ENCODE measurements at regions of chr1 and their contacts with region 1.

Region 1: GRCh38 chr1:66996018-66996682 is 57.8 kb downstream of the SLC35D1 start:
- DNase-seq: peak; percentile 79
- ATAC-seq: peak; percentile 78
- H3K4me3 ChIP-seq: no peak overlapping the region
- H3K4me3 Mint-ChIP-seq: no peak overlapping the region
- H3K27ac ChIP-seq: no peak overlapping the region
- H3K27ac Mint-ChIP-seq: no peak overlapping the region
- H3K4me1 ChIP-seq: peaks cover 3 to 4% of the 10 kb centered on the region in 2 donors
- H3K4me1 Mint-ChIP-seq: peaks cover 8% of the 10 kb centered on the region
- H3K27me3 ChIP-seq: no peaks in the 10 kb centered on the region
- H3K27me3 Mint-ChIP-seq: no peaks in the 10 kb centered on the region
- CTCF ChIP-seq: peak; percentile 77

Region 2: DNA sequence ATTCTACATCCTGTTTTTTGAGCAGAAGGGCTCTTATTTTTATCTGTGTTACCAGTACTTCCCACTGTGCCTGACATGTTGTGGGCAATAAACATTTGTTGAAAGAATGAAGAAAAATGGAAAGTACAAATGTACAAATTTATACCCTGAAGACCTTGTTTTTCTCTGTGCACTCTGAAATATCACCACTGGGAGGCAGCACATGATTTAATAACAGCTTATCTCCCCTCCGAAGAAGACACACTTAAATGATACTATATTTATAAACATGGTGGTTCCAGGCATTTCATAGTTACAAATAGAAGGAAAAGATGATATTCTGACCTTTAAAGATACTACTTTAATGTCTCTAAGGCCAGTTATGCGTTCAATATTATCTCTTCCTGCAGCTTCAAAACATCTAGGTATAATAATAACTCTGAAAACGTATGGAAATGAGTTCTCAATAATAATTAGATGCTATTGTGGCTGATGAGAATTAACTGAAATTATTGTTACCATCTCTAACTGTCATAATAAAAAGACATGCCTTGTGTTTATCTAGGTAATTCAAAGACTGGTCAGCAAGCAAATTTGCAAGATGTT is 231.1 kb before region 1 on chr1:
- CTCF ChIA-PET with region 1: interaction called, 13 read pairs
- POLR2A ChIA-PET with region 1: no interaction called
- intact Hi-C with region 1: loop called (anchors 1 kb)
- DNase-seq: peak; percentile 61
- ATAC-seq: peak; percentile 41
- H3K4me3 ChIP-seq: no peak overlapping the region
- H3K4me3 Mint-ChIP-seq: no peak overlapping the region
- H3K27ac ChIP-seq: no peak overlapping the region
- H3K27ac Mint-ChIP-seq: no peak overlapping the region
- H3K4me1 ChIP-seq: no peaks in the 10 kb centered on the region
- H3K4me1 Mint-ChIP-seq: no peaks in the 10 kb centered on the region
- H3K27me3 ChIP-seq: no peaks in the 10 kb centered on the region
- H3K27me3 Mint-ChIP-seq: no peaks in the 10 kb centered on the region
- CTCF ChIP-seq: peak; percentile 88

Region 3: GRCh38 chr1:66893703-66894102 is 102.4 kb before region 1 on chr1:
- CTCF ChIA-PET with region 1: no interaction called
- POLR2A ChIA-PET with region 1: no interaction called
- intact Hi-C with region 1: no loop called
- DNase-seq: no peak
- ATAC-seq: no peak
- H3K4me3 ChIP-seq: no peak overlapping the region
- H3K4me3 Mint-ChIP-seq: no peak overlapping the region
- H3K27ac ChIP-seq: no peak overlapping the region
- H3K27ac Mint-ChIP-seq: no peak overlapping the region
- H3K4me1 ChIP-seq: no peaks in the 10 kb centered on the region
- H3K4me1 Mint-ChIP-seq: no peaks in the 10 kb centered on the region
- H3K27me3 ChIP-seq: no peaks in the 10 kb centered on the region
- H3K27me3 Mint-ChIP-seq: no peaks in the 10 kb centered on the region
- CTCF ChIP-seq: no peak

Region 4: DNA sequence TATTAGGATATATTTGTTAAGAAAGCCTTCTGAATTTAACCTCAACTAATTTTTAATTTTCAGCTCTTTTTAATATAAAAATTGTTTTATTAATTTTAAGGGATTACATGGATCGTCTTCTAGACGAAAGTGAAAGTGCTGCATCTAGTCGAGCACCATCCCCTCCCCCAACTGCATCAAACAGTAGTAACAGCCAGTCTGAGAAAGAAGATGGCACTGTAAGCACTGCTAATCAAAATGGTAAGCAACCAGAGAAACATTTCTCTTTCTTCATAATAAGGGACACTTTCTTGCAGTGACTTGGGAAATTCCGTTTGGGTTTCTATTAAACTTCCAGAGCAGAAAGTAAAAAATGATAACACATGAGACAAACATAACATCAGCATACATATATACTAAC is 14.5 kb before region 1 on chr1:
- CTCF ChIA-PET with region 1: interaction called, 10 read pairs
- POLR2A ChIA-PET with region 1: no interaction called
- intact Hi-C with region 1: no loop called
- DNase-seq: peak; percentile 29
- ATAC-seq: no peak
- H3K4me3 ChIP-seq: peak overlapping the region in 1 of 5 experiments; percentile 5
- H3K4me3 Mint-ChIP-seq: peak overlapping the region; percentile 41
- H3K27ac ChIP-seq: peak overlapping the region in 1 of 2 donors; percentile 74
- H3K27ac Mint-ChIP-seq: no peak overlapping the region
- H3K4me1 ChIP-seq: peaks cover 0 to 6% of the 10 kb centered on the region in 2 donors
- H3K4me1 Mint-ChIP-seq: peaks cover 14% of the 10 kb centered on the region
- H3K27me3 ChIP-seq: no peaks in the 10 kb centered on the region
- H3K27me3 Mint-ChIP-seq: no peaks in the 10 kb centered on the region
- CTCF ChIP-seq: no peak

Region 5: DNA sequence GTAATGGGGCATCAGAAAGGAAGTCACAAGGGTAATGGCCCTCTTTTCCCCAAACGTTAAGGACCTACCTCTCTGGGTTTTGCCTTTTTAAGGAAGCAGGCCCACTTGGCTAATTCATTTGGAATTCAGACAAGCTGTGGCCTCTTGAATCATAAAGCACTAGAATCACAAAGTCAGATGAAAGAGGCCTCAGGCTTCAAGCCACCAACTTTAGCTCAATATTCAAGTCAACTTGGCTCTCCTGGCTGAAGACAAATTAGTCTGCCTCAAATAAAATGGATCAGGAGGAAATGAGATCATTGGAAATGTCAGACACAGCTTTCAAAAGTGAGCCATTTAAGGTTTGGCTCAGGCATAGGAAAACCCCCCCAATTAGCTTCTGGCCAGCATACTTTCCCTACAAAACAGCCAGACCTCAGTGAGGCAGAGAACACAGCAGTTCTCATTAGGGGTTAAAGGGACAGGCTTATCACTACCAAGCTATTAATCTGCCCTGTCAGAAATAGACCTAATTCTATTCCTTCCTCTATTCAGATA is 23.5 kb after region 1 on chr1:
- CTCF ChIA-PET with region 1: interaction called, 11 read pairs
- POLR2A ChIA-PET with region 1: no interaction called
- intact Hi-C with region 1: no loop called
- DNase-seq: no peak
- ATAC-seq: no peak
- H3K4me3 ChIP-seq: no peak overlapping the region
- H3K4me3 Mint-ChIP-seq: no peak overlapping the region
- H3K27ac ChIP-seq: no peak overlapping the region
- H3K27ac Mint-ChIP-seq: no peak overlapping the region
- H3K4me1 ChIP-seq: no peaks in the 10 kb centered on the region
- H3K4me1 Mint-ChIP-seq: no peaks in the 10 kb centered on the region
- H3K27me3 ChIP-seq: no peaks in the 10 kb centered on the region
- H3K27me3 Mint-ChIP-seq: no peaks in the 10 kb centered on the region
- CTCF ChIP-seq: no peak

Region 6: GRCh38 chr1:67214420-67215174 is 218.4 kb after region 1 on chr1:
- CTCF ChIA-PET with region 1: interaction called, 39 read pairs
- POLR2A ChIA-PET with region 1: no interaction called
- intact Hi-C with region 1: loop called (anchors 5 kb)
- DNase-seq: peak; percentile 50
- ATAC-seq: peak; percentile 28
- H3K4me3 ChIP-seq: no peak overlapping the region
- H3K4me3 Mint-ChIP-seq: no peak overlapping the region
- H3K27ac ChIP-seq: no peak overlapping the region
- H3K27ac Mint-ChIP-seq: no peak overlapping the region
- H3K4me1 ChIP-seq: peaks cover 0 to 8% of the 10 kb centered on the region in 2 donors
- H3K4me1 Mint-ChIP-seq: peaks cover 9% of the 10 kb centered on the region
- H3K27me3 ChIP-seq: no peaks in the 10 kb centered on the region
- H3K27me3 Mint-ChIP-seq: no peaks in the 10 kb centered on the region
- CTCF ChIP-seq: peak; percentile 70

Measured in B cell (primary cell).